ENCODE measurements at regions of chr13 and their contacts with region 1.

Region 1: DNA sequence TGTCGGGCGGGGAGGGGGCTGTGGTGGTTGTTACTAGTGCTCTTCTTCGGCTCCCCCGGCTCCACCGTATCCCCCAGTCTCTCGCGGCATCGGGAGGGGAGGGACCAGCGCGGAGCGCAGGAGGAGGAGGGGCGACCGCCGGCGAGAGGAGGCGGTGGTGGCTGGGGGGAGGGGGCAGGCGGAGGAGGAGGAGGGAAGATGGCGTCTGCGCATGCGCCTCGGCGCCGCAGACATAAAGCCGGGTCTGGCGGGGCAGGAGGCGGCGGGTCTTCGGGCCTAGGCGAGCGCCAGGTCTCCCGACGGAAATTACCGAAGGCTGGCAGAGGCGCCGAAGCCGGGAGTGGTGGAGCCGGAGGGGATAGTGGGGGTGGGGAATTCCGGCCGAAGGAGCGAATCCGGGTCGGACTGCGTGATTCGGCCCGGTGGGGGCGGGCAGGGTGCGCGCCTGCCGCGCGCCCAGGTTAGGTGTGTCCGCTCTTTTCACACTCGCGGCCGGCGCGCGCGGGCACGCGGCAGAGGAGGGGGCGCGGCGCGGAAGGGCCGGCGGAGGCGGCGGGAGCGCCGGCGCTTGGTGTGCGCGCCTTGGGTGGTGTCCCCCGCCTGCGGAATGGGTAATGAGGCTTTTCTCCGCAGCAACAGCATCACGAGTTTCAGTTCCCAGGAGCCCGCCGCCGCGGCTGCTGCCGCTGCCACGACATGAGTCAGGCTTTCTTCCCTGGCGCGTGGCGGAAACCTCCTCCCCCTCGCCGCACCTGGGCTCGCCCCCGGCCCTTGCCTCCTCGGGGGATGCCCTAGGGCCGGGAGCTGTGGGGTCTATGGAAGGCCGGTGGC is 1.3 kb upstream of the TSC22D1 start:
- DNase-seq: peak; percentile 91 to 93 (median 92)
- H3K4me3 ChIP-seq: peak overlapping the region; percentile 67 to 93 (median 85)
- H3K4me3 Mint-ChIP-seq: peak overlapping the region; percentile 90 to 92
- H3K27ac ChIP-seq: peak overlapping the region; percentile 88 to 96
- H3K27ac Mint-ChIP-seq: peak overlapping the region; percentile 86 to 97 (median 95)
- H3K4me1 ChIP-seq: peaks cover 19 to 35% of the 10 kb centered on the region in 2 donors
- H3K4me1 Mint-ChIP-seq: peaks cover 37% of the 10 kb centered on the region
- H3K27me3 ChIP-seq: peaks cover 0 to 3% of the 10 kb centered on the region in 2 donors
- H3K27me3 Mint-ChIP-seq: peaks cover 4 to 16% (median 12%) of the 10 kb centered on the region in 3 donors
- CTCF ChIP-seq: no peak

Region 2: DNA sequence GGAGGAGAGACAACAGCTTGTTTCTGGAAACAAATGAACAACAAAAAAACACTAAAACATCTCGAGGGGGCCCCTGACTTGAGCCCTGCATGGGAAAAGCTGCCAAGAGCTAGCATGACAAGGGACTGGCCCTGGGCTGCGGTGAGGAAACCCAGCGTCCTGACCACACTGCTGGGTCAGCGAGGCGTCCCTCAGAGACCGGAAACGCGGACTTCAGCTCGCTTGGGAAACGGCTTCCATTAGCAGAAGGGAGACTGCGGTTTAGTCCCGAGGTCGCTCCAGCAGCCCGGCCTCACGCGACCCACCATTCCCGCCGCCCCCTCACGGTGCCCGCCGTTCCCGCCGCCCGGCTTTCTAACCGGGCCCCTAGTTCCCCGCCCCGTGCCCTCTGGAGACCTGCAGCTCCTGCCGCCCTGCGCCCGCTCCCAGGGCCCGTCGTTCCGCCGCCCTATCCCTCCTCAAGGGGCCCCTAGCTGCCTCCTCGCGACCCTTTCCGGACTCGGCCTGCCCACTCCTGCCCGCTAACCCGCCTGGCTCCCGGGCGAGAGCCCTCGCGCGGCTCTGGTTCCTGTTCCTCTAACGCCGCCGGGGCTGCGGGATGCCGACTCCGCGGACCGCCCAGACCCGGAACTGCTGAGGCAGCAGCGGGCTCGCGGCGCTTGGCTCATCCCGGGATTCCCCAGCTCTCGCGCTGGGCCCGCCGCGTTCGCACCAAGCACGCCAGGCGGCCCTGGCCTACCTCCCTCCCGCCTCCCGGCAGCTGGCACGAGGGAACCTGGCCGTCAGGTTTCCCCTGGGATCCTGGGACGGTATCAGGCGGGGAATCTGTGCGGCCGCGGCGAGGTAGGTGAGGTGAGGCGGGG is 698.3 kb before region 1 on chr13 and contains the start of gene CCDC122:
- intact Hi-C with region 1: loop called (anchors 5 to 10 kb)
- DNase-seq: peak; percentile 97 to 99 (median 98)
- H3K4me3 ChIP-seq: peak within 1 kb of the TSS; percentile 38 to 65 (median 46)
- H3K4me3 Mint-ChIP-seq: peak within 1 kb of the TSS; percentile 85 to 96
- H3K27ac ChIP-seq: peak within 1 kb of the TSS; percentile 97 to 98
- H3K27ac Mint-ChIP-seq: peak within 1 kb of the TSS; percentile 98 to 100 (median 99)
- H3K4me1 ChIP-seq: peaks cover 24 to 27% of the 10 kb centered on the region in 2 donors
- H3K4me1 Mint-ChIP-seq: peaks cover 31% of the 10 kb centered on the region
- H3K27me3 ChIP-seq: peaks cover 0 to 2% of the 10 kb centered on the region in 2 donors
- H3K27me3 Mint-ChIP-seq: peaks cover 4 to 6% (median 5%) of the 10 kb centered on the region in 3 donors
- CTCF ChIP-seq: no peak
- polyA plus RNA-seq, gene CCDC122: 0.16 to 8.0 (median 0.52) TPM

Region 3: DNA sequence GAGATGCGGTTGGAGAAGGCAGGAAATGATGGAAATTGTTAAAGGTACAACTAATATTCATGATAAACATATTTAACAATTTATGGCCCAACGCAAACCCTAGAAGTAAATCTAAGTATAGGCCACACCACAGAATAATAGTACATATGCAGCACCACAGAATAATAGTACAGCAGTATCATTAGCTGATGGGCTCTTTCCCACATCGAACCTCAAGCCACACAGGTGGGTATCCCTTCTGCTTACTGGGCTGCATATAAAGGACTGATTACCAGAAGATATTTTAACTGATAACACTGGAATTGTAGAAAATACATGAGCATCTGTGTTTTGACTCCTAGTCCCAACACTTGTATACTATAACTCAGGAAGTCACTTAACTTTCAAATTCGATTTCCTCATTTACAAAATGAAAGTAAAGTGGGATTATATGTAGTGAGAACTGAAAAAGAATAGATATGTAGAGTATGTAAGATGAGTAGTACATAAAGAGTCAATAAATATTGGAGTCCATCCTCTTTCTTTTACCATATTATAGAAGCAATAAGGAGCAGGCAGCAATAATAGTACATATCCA is 92.8 kb before region 1 on chr13:
- intact Hi-C with region 1: loop called in 1 of 2 experiments (anchors 10 kb)
- DNase-seq: peak in 1 of 3 donors; percentile 16
- H3K4me3 ChIP-seq: peak overlapping the region in 1 of 3 experiments; percentile 34
- H3K4me3 Mint-ChIP-seq: peak overlapping the region; percentile 7 to 39
- H3K27ac ChIP-seq: peak overlapping the region in 1 of 2 donors; percentile 44
- H3K27ac Mint-ChIP-seq: peak overlapping the region in 2 of 7 donors; percentile 17 to 46
- H3K4me1 ChIP-seq: peaks cover 6 to 13% of the 10 kb centered on the region in 2 donors
- H3K4me1 Mint-ChIP-seq: peaks cover 10% of the 10 kb centered on the region
- H3K27me3 ChIP-seq: no peaks in the 10 kb centered on the region
- H3K27me3 Mint-ChIP-seq: no peaks in the 10 kb centered on the region
- CTCF ChIP-seq: no peak

Region 4: GRCh38 chr13:44537248-44537647 is 40.2 kb before region 1 on chr13:
- intact Hi-C with region 1: loop called in 1 of 2 experiments (anchors 5 kb)
- DNase-seq: no peak
- H3K4me3 ChIP-seq: no peak overlapping the region
- H3K4me3 Mint-ChIP-seq: no peak overlapping the region
- H3K27ac ChIP-seq: no peak overlapping the region
- H3K27ac Mint-ChIP-seq: no peak overlapping the region
- H3K4me1 ChIP-seq: peaks cover 0 to 4% of the 10 kb centered on the region in 2 donors
- H3K4me1 Mint-ChIP-seq: peaks cover 3% of the 10 kb centered on the region
- H3K27me3 ChIP-seq: no peaks in the 10 kb centered on the region
- H3K27me3 Mint-ChIP-seq: no peaks in the 10 kb centered on the region
- CTCF ChIP-seq: no peak

Region 5: GRCh38 chr13:44917589-44918325 is 340.3 kb after region 1 on chr13:
- intact Hi-C with region 1: loop called (anchors 5 kb)
- DNase-seq: peak; percentile 94 to 98 (median 96)
- H3K4me3 ChIP-seq: peak overlapping the region; percentile 62 to 82 (median 78)
- H3K4me3 Mint-ChIP-seq: no peak overlapping the region
- H3K27ac ChIP-seq: peak overlapping the region; percentile 82 to 93
- H3K27ac Mint-ChIP-seq: no peak overlapping the region
- H3K4me1 ChIP-seq: peaks cover 14 to 20% of the 10 kb centered on the region in 2 donors
- H3K4me1 Mint-ChIP-seq: no peaks in the 10 kb centered on the region
- H3K27me3 ChIP-seq: no peaks in the 10 kb centered on the region
- H3K27me3 Mint-ChIP-seq: peaks cover 0 to 2% (median 0%) of the 10 kb centered on the region in 3 donors
- CTCF ChIP-seq: no peak

Region 6: GRCh38 chr13:44988973-44989817 is 411.7 kb after region 1 on chr13 and contains the starts of genes GPALPP1 and NUFIP1:
- intact Hi-C with region 1: loop called (anchors 5 to 10 kb)
- DNase-seq: peak; percentile 92 to 98 (median 96)
- H3K4me3 ChIP-seq: peak within 1 kb of the TSS; percentile 80 to 94 (median 92)
- H3K4me3 Mint-ChIP-seq: peak within 1 kb of the TSS; percentile 92 to 97
- H3K27ac ChIP-seq: peak within 1 kb of the TSS; percentile 72 to 99
- H3K27ac Mint-ChIP-seq: peak within 1 kb of the TSS; percentile 95 to 100 (median 98)
- H3K4me1 ChIP-seq: peaks cover 21 to 26% of the 10 kb centered on the region in 2 donors
- H3K4me1 Mint-ChIP-seq: peaks cover 28% of the 10 kb centered on the region
- H3K27me3 ChIP-seq: no peaks in the 10 kb centered on the region
- H3K27me3 Mint-ChIP-seq: peaks cover 0 to 1% (median 0%) of the 10 kb centered on the region in 3 donors
- CTCF ChIP-seq: no peak
- polyA plus RNA-seq, gene GPALPP1: 9.4 to 13.7 (median 11.4) TPM
- polyA plus RNA-seq, gene NUFIP1: 0.83 to 1.1 (median 0.95) TPM

Measured in CD14-positive monocyte (primary cell).